ENCODE measurements at regions of chr2 and their contacts with region 1.

Region 1: DNA sequence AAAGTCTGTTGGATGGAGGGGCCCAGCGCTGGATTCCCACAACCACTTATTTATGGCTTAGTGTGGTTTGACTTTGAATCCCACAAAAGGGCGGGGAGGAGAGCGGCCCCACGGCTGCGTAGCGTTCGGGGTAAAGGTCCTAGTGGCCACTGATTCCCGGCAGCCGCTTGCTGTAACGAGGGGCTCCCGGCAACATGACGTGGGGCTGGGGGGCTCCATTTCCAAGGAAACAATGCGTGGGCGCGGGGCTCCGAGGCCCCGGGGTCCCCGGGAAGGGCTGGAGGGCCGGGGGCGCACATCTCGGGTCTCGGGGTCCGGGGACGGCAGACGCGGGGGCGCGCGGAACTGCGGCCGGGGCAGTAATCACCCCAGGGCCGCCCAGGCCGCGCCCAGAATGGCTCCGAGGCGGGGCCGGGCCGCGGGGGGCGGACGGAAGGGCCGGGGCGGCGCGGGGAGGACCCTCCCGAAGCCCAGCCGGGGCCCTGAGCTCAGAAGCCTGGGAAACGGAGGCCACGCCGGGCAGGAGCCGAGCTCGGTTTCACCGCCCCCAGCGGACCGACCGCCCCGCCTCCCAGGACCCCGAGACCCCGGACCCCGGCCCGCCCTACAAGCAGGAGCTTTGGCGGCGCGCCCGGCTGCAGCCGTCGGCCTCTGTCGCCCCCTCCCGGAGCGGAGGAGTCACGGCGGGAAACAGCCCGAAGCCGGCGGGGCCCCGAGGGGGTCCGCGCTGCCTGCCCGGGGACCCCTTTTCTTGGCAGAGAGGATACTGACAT is 11.9 kb upstream of the MLPH start:
- DNase-seq: no peak
- H3K4me3 ChIP-seq: peak overlapping the region; percentile 56
- CTCF ChIP-seq: peak; percentile 93

Region 2: DNA sequence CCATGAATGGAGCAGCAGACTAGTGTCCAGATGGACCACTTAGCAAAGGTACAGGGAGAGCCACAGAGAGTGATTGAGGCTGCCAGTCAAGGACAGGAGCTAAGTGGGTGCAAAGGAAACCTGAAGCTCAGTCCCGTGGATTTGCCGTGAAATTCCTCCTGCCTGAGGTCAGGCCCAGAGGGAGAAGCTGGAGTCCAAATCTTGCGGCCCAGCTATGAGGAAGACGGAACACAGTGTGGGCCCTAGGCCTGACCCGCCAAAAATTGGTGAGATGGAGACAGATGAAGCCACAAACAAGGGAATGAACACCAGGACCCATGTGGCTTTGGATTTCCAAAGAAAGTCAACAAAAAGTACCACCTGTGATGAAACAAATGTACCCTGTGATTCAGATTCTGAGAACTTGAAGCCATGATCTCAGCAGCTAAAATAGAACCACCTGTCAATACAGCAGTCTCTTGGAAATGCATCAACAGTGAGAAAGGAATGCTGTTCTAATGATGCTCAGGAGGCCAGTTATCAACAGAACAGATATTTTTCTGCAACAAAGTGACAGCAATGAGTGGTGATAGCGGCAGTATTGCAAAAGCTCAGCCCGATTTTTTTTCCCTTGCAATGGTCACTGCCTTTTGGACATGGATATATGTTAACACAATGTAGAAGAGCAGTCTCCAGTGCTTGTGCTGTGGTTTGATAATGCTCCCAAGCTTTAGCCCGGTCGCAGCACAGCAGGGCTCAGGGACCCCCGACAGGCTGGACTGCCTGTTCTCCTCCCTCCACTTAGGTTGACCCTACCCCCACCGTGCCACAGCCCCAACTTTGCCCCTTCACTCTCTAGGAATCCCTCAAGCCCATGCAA is 71.9 kb before region 1 on chr2:
- CTCF ChIA-PET with region 1: interaction called, 50 read pairs
- POLR2A ChIA-PET with region 1: interaction called, 3 read pairs
- DNase-seq: no peak
- H3K4me3 ChIP-seq: no peak overlapping the region
- CTCF ChIP-seq: no peak

Region 3: GRCh38 chr2:237427769-237428506 is 47.2 kb before region 1 on chr2:
- CTCF ChIA-PET with region 1: interaction called, 111 read pairs
- POLR2A ChIA-PET with region 1: no interaction called
- DNase-seq: no peak
- H3K4me3 ChIP-seq: no peak overlapping the region
- CTCF ChIP-seq: no peak

Region 4: DNA sequence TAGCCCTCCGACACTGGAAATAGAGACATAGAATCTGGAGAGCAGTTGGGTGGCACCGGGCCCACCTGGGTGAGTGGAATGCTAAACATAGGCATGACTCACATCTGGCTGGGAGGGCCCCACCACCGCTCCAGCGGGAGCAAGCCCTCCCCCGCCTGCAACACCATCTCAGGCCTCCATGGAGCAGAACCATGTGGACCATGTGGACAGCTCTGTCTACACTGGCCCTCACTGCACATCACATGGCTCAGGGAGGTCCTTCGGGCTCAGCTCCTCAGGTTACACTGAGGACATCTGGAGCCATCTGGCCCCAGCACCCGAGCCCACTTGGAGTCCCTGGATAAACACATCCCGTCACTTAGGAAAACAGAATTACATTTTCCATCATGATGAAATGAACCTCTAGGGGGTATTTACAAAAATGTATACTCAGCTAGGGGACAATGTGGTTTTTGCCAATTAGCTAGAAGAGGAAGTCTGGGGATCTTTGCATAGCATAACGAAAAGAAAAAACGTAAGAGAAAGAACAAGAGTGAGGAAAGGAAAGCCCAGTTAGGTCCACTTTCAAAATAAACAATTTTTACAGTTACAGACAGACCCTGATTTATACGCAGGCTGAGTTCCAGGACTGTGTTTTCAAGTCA is 18.8 kb before region 1 on chr2:
- CTCF ChIA-PET with region 1: interaction called, 30 read pairs
- POLR2A ChIA-PET with region 1: interaction called, 3 read pairs
- DNase-seq: peak; percentile 59
- H3K4me3 ChIP-seq: no peak overlapping the region
- CTCF ChIP-seq: no peak

Region 5: GRCh38 chr2:237500681-237501424 is 25.7 kb after region 1 on chr2:
- CTCF ChIA-PET with region 1: interaction called, 47 read pairs
- POLR2A ChIA-PET with region 1: interaction called, 9 read pairs
- DNase-seq: peak; percentile 100
- H3K4me3 ChIP-seq: no peak overlapping the region; the same call in 1 of the 2 replicates
- CTCF ChIP-seq: no peak